Activated naive CD4-positive, alpha-beta T cell treated with anti-CD3 and anti-CD28 coated beads for 36 hours (primary cell): ENCODE measurements at regions of chr1 and their contacts with region 1.

Region 1: GRCh38 chr1:7667625-7668218 is 103.4 kb upstream of the VAMP3 start:
- DNase-seq: peak; percentile 89
- H3K4me3 Mint-ChIP-seq: no peak overlapping the region
- H3K27ac Mint-ChIP-seq: no peak overlapping the region
- H3K4me1 Mint-ChIP-seq: peaks cover 1% of the 10 kb centered on the region
- H3K27me3 Mint-ChIP-seq: peaks cover 3% of the 10 kb centered on the region

Region 2: GRCh38 chr1:7680207-7680954 is 12.7 kb after region 1 on chr1:
- CTCF ChIA-PET with region 1: interaction called, 62 read pairs
- intact Hi-C with region 1: no loop called
- DNase-seq: peak; percentile 17
- H3K4me3 Mint-ChIP-seq: peak overlapping the region; percentile 70
- H3K27ac Mint-ChIP-seq: no peak overlapping the region
- H3K4me1 Mint-ChIP-seq: no peaks in the 10 kb centered on the region
- H3K27me3 Mint-ChIP-seq: no peaks in the 10 kb centered on the region

Region 3: DNA sequence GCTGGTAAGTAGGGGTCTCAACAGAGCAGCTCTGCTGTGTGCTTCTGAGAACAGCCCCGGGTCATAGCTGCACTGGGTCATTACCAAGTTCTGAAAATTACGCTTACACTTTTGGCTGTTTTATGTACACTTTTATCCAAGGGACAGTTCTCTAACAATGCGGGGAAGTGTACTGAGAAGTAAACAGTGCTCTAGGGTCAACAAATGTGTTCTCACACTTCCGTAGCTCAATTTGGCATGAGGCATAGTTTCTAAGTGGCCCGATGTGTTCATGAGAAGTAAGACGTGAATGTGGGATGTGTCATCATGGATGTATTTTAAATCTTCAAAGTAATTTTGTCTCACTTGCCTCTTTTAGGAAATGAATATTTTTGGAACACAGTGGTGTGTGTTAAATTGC is 92.5 kb after region 1 on chr1:
- CTCF ChIA-PET with region 1: interaction called, 368 read pairs
- intact Hi-C with region 1: no loop called
- DNase-seq: no peak
- H3K4me3 Mint-ChIP-seq: no peak overlapping the region
- H3K27ac Mint-ChIP-seq: no peak overlapping the region
- H3K4me1 Mint-ChIP-seq: no peaks in the 10 kb centered on the region
- H3K27me3 Mint-ChIP-seq: peaks cover 3% of the 10 kb centered on the region

Region 4: DNA sequence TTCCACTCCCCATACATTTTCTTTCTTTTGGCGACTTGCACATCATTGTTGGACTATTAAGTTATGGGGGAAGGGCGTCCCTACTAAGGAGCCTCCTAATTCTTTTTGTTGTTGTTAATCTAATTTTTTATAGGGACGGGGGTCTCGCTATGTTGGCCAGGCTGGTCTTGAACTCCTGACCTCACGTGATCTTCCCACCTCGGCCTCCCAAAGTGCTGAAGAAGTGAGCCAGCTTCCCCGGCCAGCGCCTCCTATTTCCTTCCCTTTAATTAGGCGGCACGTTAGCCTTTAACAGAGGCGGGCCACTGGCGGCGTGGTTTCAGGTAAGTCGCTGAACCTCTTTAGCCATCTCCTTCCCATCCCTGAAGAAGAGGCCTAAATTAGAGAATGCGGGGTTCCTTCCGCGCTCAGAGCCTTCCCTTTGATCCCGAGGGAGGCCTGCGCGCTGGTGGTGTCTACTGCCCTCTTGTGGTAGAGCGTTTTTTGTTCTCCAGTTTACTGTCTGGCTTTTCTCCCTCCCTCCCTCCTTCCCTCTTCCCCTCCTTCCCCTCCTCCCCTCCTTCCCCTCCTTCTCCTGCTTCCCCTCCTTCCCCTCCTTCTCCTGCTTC is 234.9 kb after region 1 on chr1:
- CTCF ChIA-PET with region 1: interaction called, 21 read pairs
- intact Hi-C with region 1: loop called (anchors 1 kb)
- DNase-seq: peak; percentile 73
- H3K4me3 Mint-ChIP-seq: peak overlapping the region; percentile 62
- H3K27ac Mint-ChIP-seq: no peak overlapping the region
- H3K4me1 Mint-ChIP-seq: peaks cover 6% of the 10 kb centered on the region
- H3K27me3 Mint-ChIP-seq: no peaks in the 10 kb centered on the region

Region 5: GRCh38 chr1:8251635-8252034 is 583.9 kb after region 1 on chr1:
- CTCF ChIA-PET with region 1: no interaction called
- intact Hi-C with region 1: no loop called
- DNase-seq: no peak
- H3K4me3 Mint-ChIP-seq: no peak overlapping the region
- H3K27ac Mint-ChIP-seq: no peak overlapping the region
- H3K4me1 Mint-ChIP-seq: peaks cover 9% of the 10 kb centered on the region
- H3K27me3 Mint-ChIP-seq: no peaks in the 10 kb centered on the region